ENCODE measurements at regions of chr12 and their contacts with region 1.

Region 1: DNA sequence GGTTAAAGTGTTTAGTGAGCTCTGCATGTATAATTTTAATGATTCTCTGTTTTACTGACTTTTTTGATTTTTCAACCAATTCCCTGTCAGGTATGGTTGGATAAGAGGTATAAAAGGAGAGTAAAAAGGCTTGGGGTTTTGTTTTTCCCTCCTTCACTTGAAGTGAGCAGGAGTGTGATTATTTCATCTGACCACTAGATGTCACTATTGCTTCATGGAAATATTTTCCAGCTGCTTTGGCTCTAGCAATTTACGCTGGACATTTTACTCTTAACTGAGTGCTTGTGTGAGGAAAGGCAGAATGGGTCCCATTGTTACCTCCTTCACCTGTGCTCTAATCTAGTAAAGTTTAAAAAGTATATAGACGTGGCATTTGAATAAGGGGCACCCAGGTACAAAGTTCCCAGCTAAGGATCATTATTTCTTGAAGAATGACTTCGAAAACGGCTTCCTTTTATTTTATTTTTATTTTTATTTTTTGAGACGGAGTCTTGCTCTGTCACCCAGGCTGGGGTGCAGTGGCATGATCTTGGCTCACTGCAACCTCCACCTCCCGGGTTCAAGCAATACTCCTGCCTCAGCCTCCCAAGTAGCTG is 66.5 kb downstream of the TBC1D30 start:
- DNase-seq: no peak
- ATAC-seq: peak; percentile 60
- H3K4me3 ChIP-seq: no peak overlapping the region
- H3K27ac ChIP-seq: no peak overlapping the region
- H3K4me1 ChIP-seq: peaks cover 26% of the 10 kb centered on the region
- H3K27me3 ChIP-seq: no peaks in the 10 kb centered on the region
- CTCF ChIP-seq: peak; percentile 48 to 69 (median 59); a peak in 5 of 6 replicates
- EP300 ChIP-seq: no peak
- POLR2A ChIP-seq: no peak
- RAD21 ChIP-seq: peak; percentile 95

Region 2: DNA sequence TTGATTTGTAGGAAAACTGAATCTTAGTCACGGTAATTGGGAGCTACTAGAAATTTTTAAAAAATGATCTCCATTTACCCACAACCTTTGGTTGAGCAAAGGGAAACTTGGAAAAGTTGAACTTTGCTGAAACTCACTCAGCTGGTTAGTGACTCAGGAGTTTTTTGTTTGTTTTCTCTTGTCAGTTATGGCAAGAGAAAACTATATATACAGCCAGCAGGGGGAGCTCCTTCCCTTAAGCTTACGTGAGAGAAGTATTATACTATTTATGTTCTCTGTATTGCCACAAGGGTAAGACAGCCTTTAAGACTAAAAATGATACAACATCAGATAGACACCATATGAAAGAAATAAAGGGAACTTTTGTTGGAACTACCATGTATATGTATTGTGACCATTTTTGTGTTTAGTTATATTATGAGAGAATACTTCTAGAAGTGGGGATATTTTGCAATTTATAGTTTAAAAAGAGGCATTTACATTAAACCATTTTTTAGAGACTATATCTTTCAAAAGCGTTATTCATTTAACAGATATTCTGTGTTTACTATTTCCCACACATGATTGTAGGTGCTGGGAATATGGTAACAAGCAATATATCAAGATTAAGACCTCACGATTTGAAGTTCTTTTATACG is 94.6 kb before region 1 on chr12:
- CTCF ChIA-PET with region 1: interaction called, 192 read pairs
- POLR2A ChIA-PET with region 1: interaction called, 5 read pairs
- RAD21 ChIA-PET with region 1: interaction called, 73 read pairs
- SMC1A ChIA-PET with region 1: interaction called, 130 read pairs
- in situ Hi-C with region 1: loop called (anchors 5 kb)
- intact Hi-C with region 1: loop called (anchors 2 kb)
- DNase-seq: no peak
- ATAC-seq: peak; percentile 86
- H3K4me3 ChIP-seq: no peak overlapping the region
- H3K27ac ChIP-seq: no peak overlapping the region
- H3K4me1 ChIP-seq: peaks cover 12% of the 10 kb centered on the region
- H3K27me3 ChIP-seq: no peaks in the 10 kb centered on the region
- CTCF ChIP-seq: peak; percentile 64 to 77 (median 71)
- EP300 ChIP-seq: no peak
- POLR2A ChIP-seq: no peak
- RAD21 ChIP-seq: peak; percentile 87

Region 3: GRCh38 chr12:64877363-64878004 is 13.5 kb before region 1 on chr12:
- CTCF ChIA-PET with region 1: interaction called, 11 read pairs
- POLR2A ChIA-PET with region 1: interaction called, 50 read pairs
- RAD21 ChIA-PET with region 1: interaction called, 81 read pairs
- SMC1A ChIA-PET with region 1: interaction called, 121 read pairs
- in situ Hi-C with region 1: no loop called
- intact Hi-C with region 1: no loop called
- DNase-seq: peak; percentile 78
- ATAC-seq: peak; percentile 82
- H3K4me3 ChIP-seq: peak overlapping the region; percentile 48
- H3K27ac ChIP-seq: peak overlapping the region; percentile 87
- H3K4me1 ChIP-seq: peaks cover 65% of the 10 kb centered on the region
- H3K27me3 ChIP-seq: no peaks in the 10 kb centered on the region
- CTCF ChIP-seq: no peak
- EP300 ChIP-seq: peak; percentile 70 to 87
- POLR2A ChIP-seq: no peak
- RAD21 ChIP-seq: no peak

Region 4: DNA sequence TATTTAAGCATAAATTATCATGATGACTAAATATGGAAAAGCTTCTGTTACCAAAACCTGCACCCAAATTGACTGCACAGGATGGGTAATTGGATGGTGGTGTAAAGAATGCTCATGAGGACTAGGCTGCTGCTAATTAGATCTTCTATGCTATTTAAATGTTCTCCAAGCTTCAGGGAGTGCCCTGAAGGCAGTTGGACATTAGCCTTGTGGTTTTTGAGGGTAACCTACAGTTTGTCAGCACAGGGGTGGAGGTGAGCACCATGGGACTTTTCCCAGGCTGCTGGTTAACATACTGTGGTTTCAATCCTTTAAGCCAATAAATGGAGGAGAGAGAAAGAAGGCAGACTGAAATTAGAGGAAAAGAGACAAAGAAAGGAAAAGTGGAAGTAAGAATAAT is 85.2 kb after region 1 on chr12:
- CTCF ChIA-PET with region 1: no interaction called
- POLR2A ChIA-PET with region 1: no interaction called
- RAD21 ChIA-PET with region 1: interaction called, 3 read pairs
- SMC1A ChIA-PET with region 1: interaction called, 4 read pairs
- in situ Hi-C with region 1: no loop called
- intact Hi-C with region 1: loop called (anchors 5 kb)
- DNase-seq: peak; percentile 40
- ATAC-seq: peak; percentile 97
- H3K4me3 ChIP-seq: no peak overlapping the region
- H3K27ac ChIP-seq: no peak overlapping the region
- H3K4me1 ChIP-seq: no peaks in the 10 kb centered on the region
- H3K27me3 ChIP-seq: no peaks in the 10 kb centered on the region
- CTCF ChIP-seq: no peak
- EP300 ChIP-seq: 0 out of 4 replicates have a peak, but pooled peaks of 1 of the 2 experiments have one; percentile 17
- POLR2A ChIP-seq: no peak
- RAD21 ChIP-seq: no peak

Region 5: DNA sequence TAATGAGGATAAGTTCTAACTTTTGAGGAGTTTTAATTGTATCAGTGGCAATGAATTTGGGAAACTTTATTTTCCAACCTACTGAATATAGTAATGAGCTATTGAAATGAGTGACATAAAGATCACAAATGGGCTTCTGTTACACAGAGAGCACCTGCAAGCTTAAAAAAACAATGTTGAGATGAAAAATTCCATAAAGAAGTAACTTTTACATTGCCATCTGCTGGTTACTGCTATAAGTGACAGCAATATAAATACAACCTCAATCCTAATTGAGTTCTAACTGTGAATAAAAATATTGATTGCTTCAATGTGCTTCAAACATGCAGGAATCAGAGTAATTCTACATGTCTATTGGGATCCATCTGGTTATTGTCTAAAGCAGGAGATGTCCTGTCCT is 216.0 kb after region 1 on chr12:
- CTCF ChIA-PET with region 1: interaction called, 91 read pairs
- POLR2A ChIA-PET with region 1: interaction called, 3 read pairs
- RAD21 ChIA-PET with region 1: interaction called, 32 read pairs
- SMC1A ChIA-PET with region 1: interaction called, 110 read pairs
- in situ Hi-C with region 1: no loop called
- intact Hi-C with region 1: loop called (anchors 2 kb)
- DNase-seq: no peak
- ATAC-seq: no peak
- H3K4me3 ChIP-seq: no peak overlapping the region
- H3K27ac ChIP-seq: no peak overlapping the region
- H3K4me1 ChIP-seq: no peaks in the 10 kb centered on the region
- H3K27me3 ChIP-seq: no peaks in the 10 kb centered on the region; a peak in 1 of 4 replicates
- CTCF ChIP-seq: peak; percentile 33 to 50 (median 39); a peak in 4 of 6 replicates
- EP300 ChIP-seq: no peak
- POLR2A ChIP-seq: no peak
- RAD21 ChIP-seq: peak; percentile 33

Region 6: DNA sequence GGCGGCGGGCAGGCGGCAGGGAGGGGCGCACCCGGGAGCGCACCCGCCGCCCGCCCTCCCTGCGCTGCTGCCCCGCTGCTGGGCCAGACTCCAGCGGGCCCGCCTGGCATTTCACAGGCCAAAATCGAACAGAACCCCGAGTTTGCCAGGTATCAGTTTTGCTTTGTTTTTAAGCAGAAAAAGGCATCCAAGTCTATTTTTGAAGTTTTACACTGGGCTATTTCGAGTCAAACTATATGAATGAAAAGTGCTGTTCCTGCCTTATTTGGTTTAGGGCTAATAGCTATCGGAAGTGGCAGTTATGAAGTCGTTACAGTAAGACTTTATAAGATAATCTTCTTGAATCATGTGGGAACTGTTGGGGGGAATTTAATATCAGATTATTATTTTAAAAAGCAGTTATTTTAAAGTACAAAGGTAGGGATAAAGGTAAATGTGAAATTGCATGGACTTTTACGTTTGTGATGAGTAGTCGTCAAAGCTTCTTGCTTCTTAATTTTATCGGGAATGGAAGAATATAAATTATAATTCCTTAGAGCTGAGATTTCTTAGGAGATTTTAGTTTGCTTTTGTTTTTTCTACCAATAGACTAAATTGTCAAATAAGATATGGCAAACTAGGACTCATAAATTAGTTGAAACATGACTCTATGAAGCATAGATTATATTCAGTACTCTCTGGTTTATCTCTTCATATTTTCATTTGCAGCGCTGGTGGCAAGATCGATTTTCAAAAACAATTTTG is 388.6 kb after region 1 on chr12:
- CTCF ChIA-PET with region 1: interaction called, 3 read pairs
- POLR2A ChIA-PET with region 1: no interaction called
- RAD21 ChIA-PET with region 1: no interaction called
- SMC1A ChIA-PET with region 1: interaction called, 3 read pairs
- in situ Hi-C with region 1: no loop called
- intact Hi-C with region 1: loop called (anchors 5 kb)
- DNase-seq: no peak
- ATAC-seq: no peak
- H3K4me3 ChIP-seq: peak overlapping the region; percentile 72
- H3K27ac ChIP-seq: no peak overlapping the region
- H3K4me1 ChIP-seq: no peaks in the 10 kb centered on the region
- H3K27me3 ChIP-seq: peaks cover 3 to 7% of the 10 kb centered on the region in 2 experiments
- CTCF ChIP-seq: no peak
- EP300 ChIP-seq: no peak
- POLR2A ChIP-seq: no peak
- RAD21 ChIP-seq: no peak

Measured in GM12878 (cell line).